Left ventricle myocardium inferior (tissue), 1 donor: ENCODE measurements at regions of chr15 and their contacts with region 1.

Region 1: DNA sequence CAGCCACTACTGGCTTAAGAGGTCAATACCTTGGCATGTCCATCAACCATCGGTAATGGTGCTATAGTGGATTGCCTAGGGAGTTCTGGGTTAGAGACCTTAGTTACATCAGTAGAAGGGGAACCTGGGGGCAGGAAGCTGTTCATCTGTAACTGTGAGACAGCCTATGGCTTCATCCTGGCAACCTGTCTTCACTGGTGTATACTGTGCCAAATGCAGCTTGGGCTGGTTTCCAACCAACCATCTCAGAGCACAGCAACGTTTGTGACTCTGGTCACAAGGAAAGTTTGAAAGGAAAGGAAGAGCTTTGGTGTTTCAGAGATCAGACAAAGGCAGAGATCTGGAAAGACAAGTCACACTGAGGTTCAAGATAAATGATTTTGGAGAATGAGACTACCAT is 93.8 kb downstream of the TJP1 start:
- DNase-seq: no peak
- H3K4me3 ChIP-seq: no peak overlapping the region
- H3K27ac ChIP-seq: no peak overlapping the region
- H3K4me1 ChIP-seq: peaks cover 24% of the 10 kb centered on the region
- H3K27me3 ChIP-seq: no peaks in the 10 kb centered on the region
- CTCF ChIP-seq: no peak

Region 2: DNA sequence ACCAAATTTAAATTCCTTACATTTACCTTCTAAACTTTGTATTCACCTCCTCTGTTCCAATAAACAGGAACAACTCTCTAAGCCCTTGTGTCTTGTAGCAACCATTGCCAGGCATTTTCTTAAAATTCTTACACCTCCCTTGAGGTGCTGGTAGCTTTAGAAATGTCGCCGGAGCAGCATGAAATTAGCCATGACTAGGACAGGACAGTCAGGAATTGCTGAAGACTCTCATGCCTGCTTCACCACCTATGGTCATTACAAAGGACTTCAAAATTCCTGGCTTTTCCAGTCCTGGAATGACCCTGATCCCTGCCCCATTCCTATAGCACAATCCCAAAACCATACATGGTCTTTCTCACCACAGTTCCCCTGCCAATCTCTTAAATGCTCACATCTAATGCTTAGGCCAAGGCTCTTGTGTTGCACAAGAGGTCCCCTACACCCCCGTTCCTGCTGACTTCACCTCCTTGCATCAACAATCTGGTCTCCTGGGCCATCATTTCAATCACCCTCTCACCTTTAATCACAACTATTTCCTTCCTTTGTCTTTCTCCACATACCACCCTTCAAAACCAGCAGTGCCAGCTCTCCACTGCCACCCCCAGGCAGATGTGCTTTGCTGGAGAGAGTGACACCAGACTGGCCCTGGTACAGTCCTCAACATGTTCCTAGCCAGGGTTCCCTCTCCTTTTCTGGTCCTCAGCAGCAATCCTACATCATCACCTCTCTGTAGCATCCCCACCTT is 207.0 kb after region 1 on chr15:
- intact Hi-C with region 1: loop called (anchors 10 kb)
- DNase-seq: no peak
- H3K4me3 ChIP-seq: no peak overlapping the region
- H3K27ac ChIP-seq: no peak overlapping the region
- H3K4me1 ChIP-seq: no peaks in the 10 kb centered on the region
- H3K27me3 ChIP-seq: no peaks in the 10 kb centered on the region
- CTCF ChIP-seq: peak; percentile 52